ENCODE measurements at regions of chr4 and their contacts with region 1.

Region 1: DNA sequence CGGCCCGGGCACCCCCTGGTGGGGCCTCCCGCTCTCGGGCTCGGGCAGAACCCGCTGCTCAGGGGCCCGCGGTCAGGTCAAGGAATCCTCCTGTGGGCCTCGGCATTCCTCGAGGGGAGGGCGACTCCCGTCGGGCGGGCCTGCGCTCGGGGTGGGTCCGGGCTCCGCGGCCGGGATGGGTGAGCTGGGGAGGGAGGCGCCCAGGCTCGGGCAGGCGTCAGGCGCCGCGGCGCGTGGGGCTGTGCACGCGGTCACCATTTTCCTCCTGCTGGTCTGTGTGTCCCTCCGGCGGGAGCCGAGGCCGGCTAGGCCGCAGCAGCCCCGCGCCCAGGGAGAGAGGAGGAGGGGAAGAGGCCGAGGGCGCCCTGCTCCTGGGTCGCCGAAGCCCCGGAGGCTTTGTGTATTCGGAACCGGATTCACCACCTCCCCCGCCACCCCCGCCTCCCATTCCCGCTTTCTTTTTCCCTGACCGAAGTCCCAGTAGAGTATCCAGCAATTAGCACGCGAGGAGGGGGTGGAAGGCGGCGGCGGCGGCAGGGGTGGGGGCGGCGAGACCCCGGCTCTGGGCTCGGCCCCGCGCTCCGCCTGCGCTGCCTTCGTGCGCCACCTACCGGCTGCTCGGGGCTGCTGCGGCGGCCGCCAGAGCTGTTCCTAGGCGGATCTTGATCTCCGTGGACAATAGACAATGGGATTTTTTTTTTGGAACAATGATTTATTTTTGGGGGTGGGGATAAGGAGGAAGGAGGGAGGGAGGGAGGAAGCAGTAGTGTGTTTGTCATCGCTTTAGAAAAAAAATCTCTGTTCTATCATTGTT is 99.0 kb upstream of the MAML3 start:
- DNase-seq: peak; percentile 62
- ATAC-seq: peak; percentile 69
- H3K4me3 Mint-ChIP-seq: peak overlapping the region; percentile 29
- H3K27ac Mint-ChIP-seq: no peak overlapping the region
- H3K4me1 Mint-ChIP-seq: peaks cover 25% of the 10 kb centered on the region
- H3K27me3 Mint-ChIP-seq: peaks cover 11% of the 10 kb centered on the region
- CTCF ChIP-seq: peak; percentile 97

Region 2: DNA sequence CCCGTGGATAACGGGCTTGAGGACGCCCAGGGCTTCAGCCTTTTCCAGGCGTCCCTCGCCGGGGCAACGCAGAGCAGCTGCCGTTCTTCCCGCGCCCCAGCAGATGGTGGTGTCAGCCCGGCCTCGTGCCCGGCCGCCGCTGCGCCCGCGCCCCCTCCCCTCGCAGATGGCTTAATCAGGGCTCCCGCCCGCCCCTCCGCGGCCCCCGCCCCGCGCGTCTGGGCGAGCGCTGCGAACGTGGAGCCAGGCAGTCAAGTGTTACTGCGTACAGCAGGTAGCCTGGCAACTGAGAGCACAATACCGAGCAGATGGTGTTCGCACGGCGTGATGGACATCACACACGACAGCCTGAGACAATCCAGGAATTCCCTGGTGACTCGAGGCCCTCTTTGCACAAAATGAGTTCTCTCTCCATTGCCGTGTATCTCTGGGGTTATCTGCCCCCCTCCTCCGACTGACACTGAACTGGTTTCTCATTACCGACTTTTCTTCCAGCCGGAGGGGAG is 518.0 kb before region 1 on chr4:
- CTCF ChIA-PET with region 1: interaction called, 11 read pairs
- POLR2A ChIA-PET with region 1: interaction called, 3 read pairs
- intact Hi-C with region 1: loop called (anchors 10 kb)
- DNase-seq: peak; percentile 76
- ATAC-seq: peak; percentile 82
- H3K4me3 Mint-ChIP-seq: peak overlapping the region; percentile 60
- H3K27ac Mint-ChIP-seq: no peak overlapping the region
- H3K4me1 Mint-ChIP-seq: peaks cover 16% of the 10 kb centered on the region
- H3K27me3 Mint-ChIP-seq: peaks cover 38% of the 10 kb centered on the region
- CTCF ChIP-seq: peak; percentile 78

Region 3: GRCh38 chr4:140012688-140013486 is 240.1 kb before region 1 on chr4:
- CTCF ChIA-PET with region 1: interaction called, 65 read pairs
- POLR2A ChIA-PET with region 1: no interaction called
- intact Hi-C with region 1: loop called (anchors 2 kb)
- DNase-seq: peak; percentile 70
- ATAC-seq: peak; percentile 83
- H3K4me3 Mint-ChIP-seq: no peak overlapping the region
- H3K27ac Mint-ChIP-seq: no peak overlapping the region
- H3K4me1 Mint-ChIP-seq: peaks cover 8% of the 10 kb centered on the region
- H3K27me3 Mint-ChIP-seq: peaks cover 3% of the 10 kb centered on the region
- CTCF ChIP-seq: peak; percentile 64

Region 4: GRCh38 chr4:140088323-140088967 is 164.5 kb before region 1 on chr4:
- CTCF ChIA-PET with region 1: no interaction called
- POLR2A ChIA-PET with region 1: no interaction called
- intact Hi-C with region 1: no loop called
- DNase-seq: no peak
- ATAC-seq: no peak
- H3K4me3 Mint-ChIP-seq: no peak overlapping the region
- H3K27ac Mint-ChIP-seq: no peak overlapping the region
- H3K4me1 Mint-ChIP-seq: peaks cover 22% of the 10 kb centered on the region
- H3K27me3 Mint-ChIP-seq: no peaks in the 10 kb centered on the region
- CTCF ChIP-seq: no peak

Region 5: DNA sequence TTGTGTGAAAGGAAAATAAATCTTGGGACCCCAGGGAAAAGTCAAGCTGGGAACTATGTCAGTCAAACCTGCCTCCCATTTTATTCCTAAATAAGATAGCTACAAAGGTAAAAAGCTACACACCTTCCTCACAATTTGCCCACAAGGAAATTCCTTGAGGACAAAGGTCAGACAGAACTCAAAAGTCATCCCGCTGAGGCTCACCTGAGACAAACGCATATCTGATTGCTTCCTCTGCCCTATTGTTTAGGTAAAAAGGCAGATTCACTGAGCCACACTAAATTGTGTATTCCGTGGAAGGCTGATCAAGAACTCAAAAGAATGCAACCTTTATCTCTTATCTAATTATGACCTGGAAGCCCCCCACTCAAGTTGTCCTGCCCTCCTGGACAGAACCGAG is 40.3 kb before region 1 on chr4:
- CTCF ChIA-PET with region 1: no interaction called
- POLR2A ChIA-PET with region 1: no interaction called
- intact Hi-C with region 1: no loop called
- DNase-seq: no peak
- ATAC-seq: no peak
- H3K4me3 Mint-ChIP-seq: no peak overlapping the region
- H3K27ac Mint-ChIP-seq: no peak overlapping the region
- H3K4me1 Mint-ChIP-seq: peaks cover 4% of the 10 kb centered on the region
- H3K27me3 Mint-ChIP-seq: peaks cover 2% of the 10 kb centered on the region
- CTCF ChIP-seq: no peak

Region 6: GRCh38 chr4:140233791-140234696 is 18.9 kb before region 1 on chr4:
- CTCF ChIA-PET with region 1: interaction called, 32 read pairs
- POLR2A ChIA-PET with region 1: no interaction called
- intact Hi-C with region 1: no loop called
- DNase-seq: peak; percentile 28
- ATAC-seq: peak; percentile 53
- H3K4me3 Mint-ChIP-seq: no peak overlapping the region
- H3K27ac Mint-ChIP-seq: peak overlapping the region; percentile 88
- H3K4me1 Mint-ChIP-seq: peaks cover 18% of the 10 kb centered on the region
- H3K27me3 Mint-ChIP-seq: peaks cover 8% of the 10 kb centered on the region
- CTCF ChIP-seq: no peak

Region 7: DNA sequence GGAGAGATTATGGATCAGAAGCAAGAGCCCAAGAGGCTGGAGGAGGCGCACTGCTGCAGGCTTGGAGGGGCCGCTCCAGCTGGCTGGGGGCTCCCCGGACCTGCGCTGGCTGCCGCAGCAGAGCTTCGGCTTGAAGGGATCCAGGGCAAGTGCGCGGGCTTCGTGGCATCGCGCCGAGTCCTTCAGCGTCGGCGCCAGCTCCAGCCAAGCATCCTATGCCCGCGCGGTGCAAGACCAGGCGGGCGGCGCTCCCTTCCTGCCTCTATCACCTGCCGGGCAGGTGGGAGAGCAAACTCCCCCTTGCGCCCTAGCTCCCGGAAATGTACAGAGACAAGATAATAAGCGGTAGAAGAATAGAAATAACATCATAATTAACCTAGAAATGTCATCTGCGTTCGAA is 326.3 kb after region 1 on chr4:
- CTCF ChIA-PET with region 1: no interaction called
- POLR2A ChIA-PET with region 1: no interaction called
- intact Hi-C with region 1: no loop called
- DNase-seq: no peak
- ATAC-seq: no peak
- H3K4me3 Mint-ChIP-seq: no peak overlapping the region
- H3K27ac Mint-ChIP-seq: no peak overlapping the region
- H3K4me1 Mint-ChIP-seq: no peaks in the 10 kb centered on the region
- H3K27me3 Mint-ChIP-seq: peaks cover 47% of the 10 kb centered on the region
- CTCF ChIP-seq: no peak

Region 8: DNA sequence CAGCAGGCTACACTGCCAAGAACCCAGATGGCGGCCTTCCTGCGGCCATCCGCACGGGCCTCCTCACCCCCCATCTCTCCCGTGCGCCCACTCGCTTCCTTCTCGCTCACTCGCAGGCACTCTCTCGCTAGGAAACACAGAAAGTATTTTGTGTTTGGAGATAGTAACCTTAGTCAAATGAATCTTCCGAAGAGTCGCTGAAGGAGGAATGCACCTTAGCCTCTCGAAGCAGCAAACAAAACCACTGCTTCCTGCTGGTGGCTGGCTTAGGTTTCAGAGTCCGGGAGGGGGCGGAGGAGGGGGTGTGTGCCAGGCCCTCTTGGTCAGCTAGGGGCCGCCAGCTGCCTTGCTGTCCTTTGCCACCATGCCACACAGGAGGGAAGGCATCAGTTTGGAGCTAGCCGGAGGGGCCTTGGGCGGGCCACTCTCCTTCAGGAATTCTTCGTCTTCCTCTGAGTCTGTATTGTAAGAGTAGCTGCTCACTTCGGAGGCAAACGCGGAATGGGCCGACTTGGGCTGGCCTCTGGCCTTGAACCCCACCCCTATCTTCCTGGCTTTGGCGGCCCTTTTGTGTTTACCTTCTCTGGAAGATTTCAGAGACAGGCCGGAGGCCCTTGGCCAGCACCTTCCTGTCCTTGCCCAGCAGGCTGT is 389.0 kb after region 1 on chr4:
- CTCF ChIA-PET with region 1: no interaction called
- POLR2A ChIA-PET with region 1: no interaction called
- intact Hi-C with region 1: no loop called
- DNase-seq: no peak
- ATAC-seq: no peak
- H3K4me3 Mint-ChIP-seq: no peak overlapping the region
- H3K27ac Mint-ChIP-seq: no peak overlapping the region
- H3K4me1 Mint-ChIP-seq: no peaks in the 10 kb centered on the region
- H3K27me3 Mint-ChIP-seq: peaks cover 5% of the 10 kb centered on the region
- CTCF ChIP-seq: no peak